ENCODE measurements at regions of chr6 and their contacts with region 1.

Region 1: GRCh38 chr6:85389151-85389797 is 60.6 kb upstream of the NT5E start:
- DNase-seq: no peak

Region 2: DNA sequence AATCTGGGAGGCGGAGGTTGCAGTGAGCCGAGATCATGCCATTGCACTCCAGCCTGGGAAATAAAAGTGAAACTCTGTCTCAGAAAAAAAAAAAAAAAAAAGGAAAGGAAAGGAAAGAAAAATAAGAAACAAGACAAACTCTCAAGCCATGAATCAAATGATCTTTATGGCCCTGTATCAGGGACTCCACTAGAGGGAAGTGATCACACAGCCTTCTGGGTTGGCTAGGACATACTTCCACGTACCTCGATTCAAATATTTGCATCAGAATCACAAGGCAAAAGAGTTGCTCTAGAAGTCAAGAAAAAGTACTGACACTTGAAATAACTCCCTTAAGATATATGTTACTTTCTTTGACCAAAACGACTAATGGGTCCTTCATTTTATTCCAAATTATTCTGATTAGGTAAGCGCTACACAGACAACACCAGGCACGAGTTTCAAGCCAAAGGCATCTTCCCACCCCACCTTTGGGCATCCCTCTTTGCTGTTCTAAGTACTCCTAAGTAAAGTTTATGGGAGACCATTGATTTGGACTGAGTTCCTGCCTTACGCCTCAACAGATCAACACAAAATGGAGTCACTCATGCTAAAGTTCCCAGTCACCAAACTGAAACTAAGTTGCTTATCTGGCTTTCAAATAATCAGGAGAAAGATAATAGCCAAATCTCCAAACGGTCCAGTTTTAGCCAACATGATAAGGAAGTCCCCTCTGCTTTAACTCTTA is 16.9 kb before region 1 on chr6:
- CTCF ChIA-PET with region 1: no interaction called
- POLR2A ChIA-PET with region 1: no interaction called
- DNase-seq: no peak

Region 3: GRCh38 chr6:85421997-85422401 is 32.7 kb after region 1 on chr6:
- CTCF ChIA-PET with region 1: interaction called, 11 read pairs
- POLR2A ChIA-PET with region 1: no interaction called
- DNase-seq: no peak

Measured in HEK293T (cell line).